ENCODE measurements at regions of chr16 and their contacts with region 1.

Region 1: DNA sequence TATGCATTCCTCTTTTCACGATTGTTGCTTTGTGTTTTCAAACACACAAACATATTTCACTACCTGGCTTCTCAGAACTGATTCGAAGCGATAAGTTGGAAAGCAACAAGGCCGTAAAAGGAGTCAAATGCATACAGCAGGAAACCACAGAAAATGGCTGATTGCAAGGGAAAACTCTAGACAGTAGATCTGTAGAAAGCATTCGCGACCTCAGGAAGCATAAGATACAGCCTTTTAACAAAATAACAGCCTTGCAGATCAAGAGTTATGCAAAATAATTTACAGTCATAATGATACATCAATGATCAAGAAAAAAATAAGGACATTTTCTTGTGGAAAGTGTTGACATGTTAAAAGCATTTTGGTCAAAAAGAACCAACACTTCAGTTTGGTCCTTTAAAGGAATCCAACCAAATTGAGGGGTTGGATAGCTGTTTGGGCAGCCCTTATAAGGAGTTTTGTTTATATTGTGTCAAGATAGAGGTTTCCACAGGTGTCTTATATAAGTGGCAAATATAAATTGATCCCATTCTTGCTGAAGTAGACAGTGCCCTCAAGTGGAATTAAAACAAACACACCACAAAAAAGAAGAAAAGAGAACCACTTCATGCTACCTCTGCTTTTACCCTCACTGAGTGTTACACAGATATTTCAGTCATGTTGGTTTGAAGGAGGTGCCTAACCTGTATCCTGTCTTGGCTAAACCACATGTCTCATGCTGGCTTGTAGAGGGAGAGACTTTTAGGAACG is 5.5 kb downstream of the CYLD start:
- DNase-seq: peak; percentile 57
- ATAC-seq: peak; percentile 73
- H3K4me3 ChIP-seq: peak overlapping the region; percentile 62; the same call in 1 of the 2 replicates
- H3K27ac ChIP-seq: peak overlapping the region; percentile 75
- H3K4me1 ChIP-seq: peaks cover 20% of the 10 kb centered on the region
- H3K27me3 ChIP-seq: no peaks in the 10 kb centered on the region
- CTCF ChIP-seq: peak; percentile 37 to 68 (median 59); a peak in 5 of 6 replicates
- EP300 ChIP-seq: no peak
- POLR2A ChIP-seq: no peak
- RAD21 ChIP-seq: peak; percentile 79

Region 2: GRCh38 chr16:50368410-50369132 is 378.8 kb before region 1 on chr16 and contains the start of gene BRD7:
- CTCF ChIA-PET with region 1: interaction called, 7 read pairs
- POLR2A ChIA-PET with region 1: no interaction called
- RAD21 ChIA-PET with region 1: interaction called, 3 read pairs
- SMC1A ChIA-PET with region 1: interaction called, 3 read pairs
- in situ Hi-C with region 1: no loop called
- intact Hi-C with region 1: loop called (anchors 2 kb)
- DNase-seq: no peak
- ATAC-seq: peak; percentile 82
- H3K4me3 ChIP-seq: peak within 1 kb of the TSS; percentile 91
- H3K27ac ChIP-seq: peak within 1 kb of the TSS; percentile 54
- H3K4me1 ChIP-seq: no peaks in the 10 kb centered on the region; the same call in 1 of the 2 replicates
- H3K27me3 ChIP-seq: no peaks in the 10 kb centered on the region
- CTCF ChIP-seq: peak in 2 of 3 experiments; percentile 42 to 52; a peak in 3 of 6 replicates
- EP300 ChIP-seq: no peak
- POLR2A ChIP-seq: peak; percentile 49; the same call in 1 of the 2 replicates
- RAD21 ChIP-seq: no peak; the same call in 1 of the 2 replicates
- polyA plus RNA-seq, gene BRD7: 16.9 to 36.5 TPM

Region 3: DNA sequence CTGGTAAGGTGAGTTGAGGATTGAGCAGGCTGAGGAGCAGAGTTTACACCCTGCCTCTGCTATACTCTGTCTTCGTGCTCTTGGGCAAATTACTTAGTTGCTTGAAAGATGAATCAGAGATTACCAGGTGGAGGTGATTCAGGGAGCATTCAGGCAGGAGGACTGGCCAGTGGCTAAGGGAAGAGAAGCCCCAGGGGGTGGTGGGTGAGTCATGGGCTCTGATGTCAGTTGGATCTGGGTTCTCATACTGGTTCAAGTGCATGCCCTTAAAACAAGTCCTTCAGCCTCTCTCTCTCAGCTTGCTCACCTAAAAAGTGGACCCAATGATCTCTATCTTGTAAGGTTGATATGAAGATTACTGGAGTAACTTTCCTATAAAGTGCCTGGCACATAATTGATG is 350.2 kb before region 1 on chr16:
- CTCF ChIA-PET with region 1: no interaction called
- POLR2A ChIA-PET with region 1: no interaction called
- RAD21 ChIA-PET with region 1: no interaction called
- SMC1A ChIA-PET with region 1: no interaction called
- in situ Hi-C with region 1: no loop called
- intact Hi-C with region 1: no loop called
- DNase-seq: no peak
- ATAC-seq: no peak
- H3K4me3 ChIP-seq: no peak overlapping the region
- H3K27ac ChIP-seq: no peak overlapping the region
- H3K4me1 ChIP-seq: no peaks in the 10 kb centered on the region
- H3K27me3 ChIP-seq: peaks cover 0 to 1% of the 10 kb centered on the region in 2 experiments; a peak in 2 of 4 replicates
- CTCF ChIP-seq: no peak
- EP300 ChIP-seq: no peak
- POLR2A ChIP-seq: no peak
- RAD21 ChIP-seq: no peak

Region 4: GRCh38 chr16:50548125-50548908 is 199.1 kb before region 1 on chr16 and contains the start of gene NKD1:
- CTCF ChIA-PET with region 1: interaction called, 5 read pairs
- POLR2A ChIA-PET with region 1: no interaction called
- RAD21 ChIA-PET with region 1: no interaction called
- SMC1A ChIA-PET with region 1: interaction called, 3 read pairs
- in situ Hi-C with region 1: no loop called
- intact Hi-C with region 1: loop called (anchors 5 kb)
- DNase-seq: no peak
- ATAC-seq: peak; percentile 93
- H3K4me3 ChIP-seq: peak within 1 kb of the TSS; percentile 83
- H3K27ac ChIP-seq: no peak within 1 kb of the TSS
- H3K4me1 ChIP-seq: no peaks in the 10 kb centered on the region
- H3K27me3 ChIP-seq: peaks cover 3 to 4% of the 10 kb centered on the region in 2 experiments; a peak in 3 of 4 replicates
- CTCF ChIP-seq: no peak
- EP300 ChIP-seq: no peak
- POLR2A ChIP-seq: peak; percentile 59
- RAD21 ChIP-seq: no peak
- polyA plus RNA-seq, gene NKD1: under 0.01 TPM in 1 of 2 experiments, not detected in the other

Region 5: DNA sequence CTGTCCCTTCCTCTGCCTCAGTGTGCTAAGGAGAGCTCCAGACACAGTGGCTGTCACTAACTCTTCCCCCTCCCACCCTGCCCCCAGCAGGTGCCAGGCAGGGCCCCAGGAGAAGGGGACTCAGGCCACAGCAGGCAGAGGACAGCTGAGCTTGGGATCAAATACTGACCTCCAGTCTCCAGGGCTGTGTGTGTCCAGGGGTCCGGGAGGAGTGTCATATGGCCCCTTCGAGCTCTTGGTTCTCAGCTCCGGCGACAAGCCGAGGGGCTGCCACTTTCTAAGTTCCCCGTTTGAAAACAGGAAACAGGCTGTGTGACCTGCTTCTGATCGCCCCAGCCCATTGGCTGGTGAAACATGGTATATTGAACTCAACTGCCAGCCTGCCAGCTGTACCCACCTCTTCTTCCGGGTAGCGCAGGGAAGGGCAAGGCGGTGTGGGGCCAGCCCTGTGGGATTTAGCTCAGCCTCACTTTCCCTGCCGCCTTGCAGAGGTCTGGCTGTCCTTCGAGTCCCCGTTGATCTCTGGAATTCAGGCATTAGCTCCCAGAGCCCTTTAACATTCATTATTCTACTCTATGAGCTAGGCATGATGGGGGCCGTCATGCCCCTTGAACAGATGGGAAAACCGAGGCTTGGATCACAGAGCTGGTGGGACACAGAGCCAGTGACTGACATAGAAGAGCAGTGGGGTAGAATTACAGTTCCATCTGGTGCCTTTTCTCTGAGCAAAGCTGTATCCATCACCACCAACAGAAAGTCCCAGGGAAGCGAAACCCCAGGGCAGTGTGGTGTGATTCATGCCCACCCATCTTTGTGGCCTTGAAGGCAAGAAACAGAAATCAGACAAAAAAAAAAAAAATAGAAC is 66.1 kb before region 1 on chr16 and contains the start of gene SNX20:
- CTCF ChIA-PET with region 1: interaction called, 636 read pairs
- POLR2A ChIA-PET with region 1: interaction called, 42 read pairs
- RAD21 ChIA-PET with region 1: interaction called, 578 read pairs
- SMC1A ChIA-PET with region 1: interaction called, 600 read pairs
- in situ Hi-C with region 1: no loop called
- intact Hi-C with region 1: loop called (anchors 1 kb)
- DNase-seq: peak; percentile 63
- ATAC-seq: peak; percentile 65
- H3K4me3 ChIP-seq: peak within 1 kb of the TSS; percentile 72
- H3K27ac ChIP-seq: peak within 1 kb of the TSS; percentile 84
- H3K4me1 ChIP-seq: peaks cover 50% of the 10 kb centered on the region
- H3K27me3 ChIP-seq: no peaks in the 10 kb centered on the region
- CTCF ChIP-seq: no peak
- EP300 ChIP-seq: no peak
- POLR2A ChIP-seq: peak; percentile 68
- RAD21 ChIP-seq: no peak
- polyA plus RNA-seq, gene SNX20: 4.6 to 6.9 TPM

Region 6: GRCh38 chr16:50719518-50720337 is 27.7 kb before region 1 on chr16:
- CTCF ChIA-PET with region 1: interaction called, 6 read pairs
- POLR2A ChIA-PET with region 1: no interaction called
- RAD21 ChIA-PET with region 1: interaction called, 5 read pairs
- SMC1A ChIA-PET with region 1: interaction called, 10 read pairs
- in situ Hi-C with region 1: no loop called
- intact Hi-C with region 1: no loop called
- DNase-seq: no peak
- ATAC-seq: peak; percentile 53
- H3K4me3 ChIP-seq: no peak overlapping the region
- H3K27ac ChIP-seq: no peak overlapping the region
- H3K4me1 ChIP-seq: no peaks in the 10 kb centered on the region
- H3K27me3 ChIP-seq: no peaks in the 10 kb centered on the region
- CTCF ChIP-seq: peak in 1 of 3 experiments; percentile 21; a peak in 1 of 6 replicates
- EP300 ChIP-seq: no peak
- POLR2A ChIP-seq: no peak
- RAD21 ChIP-seq: no peak

Region 7: DNA sequence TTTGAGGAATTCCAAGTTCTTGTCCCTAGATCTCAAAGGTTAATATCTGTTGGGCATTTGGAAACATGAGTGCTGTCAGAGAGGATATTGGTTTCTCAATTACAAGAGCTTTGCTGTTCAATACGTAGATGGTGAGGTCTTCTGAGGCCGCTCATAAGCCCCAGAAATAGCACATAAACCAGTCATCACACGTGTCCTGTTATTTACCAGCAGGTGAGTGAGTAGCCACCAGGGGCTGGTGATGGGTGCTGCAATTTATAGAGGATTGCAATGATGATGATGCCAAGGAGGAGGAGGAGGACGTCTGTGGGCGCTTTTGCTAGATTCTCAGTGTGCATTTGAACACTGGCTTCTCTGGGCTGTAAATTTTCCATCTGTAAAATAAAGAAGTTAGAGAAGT is 314.7 kb after region 1 on chr16:
- CTCF ChIA-PET with region 1: no interaction called
- POLR2A ChIA-PET with region 1: no interaction called
- RAD21 ChIA-PET with region 1: no interaction called
- SMC1A ChIA-PET with region 1: no interaction called
- in situ Hi-C with region 1: no loop called
- intact Hi-C with region 1: no loop called
- DNase-seq: no peak
- ATAC-seq: no peak
- H3K4me3 ChIP-seq: no peak overlapping the region
- H3K27ac ChIP-seq: no peak overlapping the region
- H3K4me1 ChIP-seq: no peaks in the 10 kb centered on the region
- H3K27me3 ChIP-seq: no peaks in the 10 kb centered on the region
- CTCF ChIP-seq: no peak
- EP300 ChIP-seq: no peak
- POLR2A ChIP-seq: no peak
- RAD21 ChIP-seq: no peak